ENCODE measurements at regions of chr20 and their contacts with region 1.

Region 1: DNA sequence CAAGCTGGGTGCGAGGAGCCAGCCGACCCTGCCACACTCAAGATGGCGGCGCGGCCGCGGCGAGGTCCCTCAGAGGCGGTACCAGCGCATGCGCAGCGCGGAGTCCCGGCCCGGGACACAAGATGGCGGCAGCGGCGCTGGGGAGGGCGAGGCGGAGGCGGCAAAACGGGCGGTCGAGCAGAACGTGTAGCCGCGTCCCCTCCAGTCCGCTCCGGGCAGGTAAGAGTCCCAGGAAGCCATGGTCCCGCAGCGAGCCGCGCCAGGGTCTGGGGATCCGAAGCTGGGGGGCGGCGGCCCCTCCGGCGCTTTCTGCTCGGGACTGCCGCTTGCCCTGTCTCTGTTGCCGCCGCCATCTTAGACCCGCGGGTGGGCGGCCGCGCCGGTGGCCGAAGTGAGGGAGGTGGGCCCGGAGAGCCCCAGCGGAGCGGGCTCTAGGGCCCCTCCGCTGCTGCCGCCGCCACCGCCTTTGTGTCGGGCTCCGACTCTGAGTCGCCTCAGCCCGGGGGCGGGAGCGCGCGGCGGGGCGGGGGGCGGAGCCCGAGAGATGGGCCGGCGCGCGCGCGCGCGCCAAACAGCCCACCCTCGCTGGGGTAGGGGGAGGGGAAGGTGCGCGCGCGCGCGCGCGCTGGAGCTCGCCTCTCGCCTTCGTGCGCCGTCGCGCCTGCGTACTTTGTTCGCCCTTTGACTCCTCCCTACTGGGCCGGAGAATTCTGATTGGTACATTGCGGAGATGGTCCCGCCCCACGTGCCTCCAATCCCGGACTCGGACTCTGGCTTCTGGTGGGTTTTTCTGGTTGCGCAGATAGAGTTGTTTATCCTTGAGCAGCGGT is at the start of gene PCIF1:
- DNase-seq: peak; percentile 96
- H3K4me3 Mint-ChIP-seq: peak within 1 kb of the TSS; percentile 99
- H3K27ac Mint-ChIP-seq: peak within 1 kb of the TSS; percentile 98
- H3K4me1 Mint-ChIP-seq: peaks cover 23% of the 10 kb centered on the region
- H3K27me3 Mint-ChIP-seq: no peaks in the 10 kb centered on the region
- total RNA-seq, gene PCIF1: 27.9 and 28.5 TPM in 2 replicates

Region 2: GRCh38 chr20:45812157-45813020 is 122.4 kb before region 1 on chr20 and contains the start of gene UBE2C:
- intact Hi-C with region 1: loop called (anchors 1 kb)
- DNase-seq: peak; percentile 95
- H3K4me3 Mint-ChIP-seq: peak within 1 kb of the TSS; percentile 89
- H3K27ac Mint-ChIP-seq: peak within 1 kb of the TSS; percentile 82
- H3K4me1 Mint-ChIP-seq: peaks cover 35% of the 10 kb centered on the region
- H3K27me3 Mint-ChIP-seq: no peaks in the 10 kb centered on the region
- total RNA-seq, gene UBE2C: 114 and 118 TPM in 2 replicates

Region 3: GRCh38 chr20:45880988-45881788 is 53.6 kb before region 1 on chr20 and contains the start of gene ZSWIM1:
- intact Hi-C with region 1: loop called (anchors 1 kb)
- DNase-seq: peak; percentile 96
- H3K4me3 Mint-ChIP-seq: peak within 1 kb of the TSS; percentile 84
- H3K27ac Mint-ChIP-seq: peak within 1 kb of the TSS; percentile 72
- H3K4me1 Mint-ChIP-seq: peaks cover 45% of the 10 kb centered on the region
- H3K27me3 Mint-ChIP-seq: peaks cover 2% of the 10 kb centered on the region
- total RNA-seq, gene ZSWIM1: 7.5 and 7.8 TPM in 2 replicates

Region 4: GRCh38 chr20:45910670-45911485 is 23.9 kb before region 1 on chr20:
- intact Hi-C with region 1: loop called (anchors 1 kb)
- DNase-seq: peak; percentile 81
- H3K4me3 Mint-ChIP-seq: peak overlapping the region; percentile 45
- H3K27ac Mint-ChIP-seq: peak overlapping the region; percentile 33
- H3K4me1 Mint-ChIP-seq: peaks cover 14% of the 10 kb centered on the region
- H3K27me3 Mint-ChIP-seq: peaks cover 14% of the 10 kb centered on the region

Region 5: GRCh38 chr20:46363800-46364634 is 429.2 kb after region 1 on chr20:
- intact Hi-C with region 1: loop called (anchors 1 kb)
- DNase-seq: peak; percentile 82
- H3K4me3 Mint-ChIP-seq: peak overlapping the region; percentile 93
- H3K27ac Mint-ChIP-seq: peak overlapping the region; percentile 82
- H3K4me1 Mint-ChIP-seq: peaks cover 66% of the 10 kb centered on the region
- H3K27me3 Mint-ChIP-seq: no peaks in the 10 kb centered on the region